ENCODE measurements at regions of chr11 and their contacts with region 1.

Region 1: DNA sequence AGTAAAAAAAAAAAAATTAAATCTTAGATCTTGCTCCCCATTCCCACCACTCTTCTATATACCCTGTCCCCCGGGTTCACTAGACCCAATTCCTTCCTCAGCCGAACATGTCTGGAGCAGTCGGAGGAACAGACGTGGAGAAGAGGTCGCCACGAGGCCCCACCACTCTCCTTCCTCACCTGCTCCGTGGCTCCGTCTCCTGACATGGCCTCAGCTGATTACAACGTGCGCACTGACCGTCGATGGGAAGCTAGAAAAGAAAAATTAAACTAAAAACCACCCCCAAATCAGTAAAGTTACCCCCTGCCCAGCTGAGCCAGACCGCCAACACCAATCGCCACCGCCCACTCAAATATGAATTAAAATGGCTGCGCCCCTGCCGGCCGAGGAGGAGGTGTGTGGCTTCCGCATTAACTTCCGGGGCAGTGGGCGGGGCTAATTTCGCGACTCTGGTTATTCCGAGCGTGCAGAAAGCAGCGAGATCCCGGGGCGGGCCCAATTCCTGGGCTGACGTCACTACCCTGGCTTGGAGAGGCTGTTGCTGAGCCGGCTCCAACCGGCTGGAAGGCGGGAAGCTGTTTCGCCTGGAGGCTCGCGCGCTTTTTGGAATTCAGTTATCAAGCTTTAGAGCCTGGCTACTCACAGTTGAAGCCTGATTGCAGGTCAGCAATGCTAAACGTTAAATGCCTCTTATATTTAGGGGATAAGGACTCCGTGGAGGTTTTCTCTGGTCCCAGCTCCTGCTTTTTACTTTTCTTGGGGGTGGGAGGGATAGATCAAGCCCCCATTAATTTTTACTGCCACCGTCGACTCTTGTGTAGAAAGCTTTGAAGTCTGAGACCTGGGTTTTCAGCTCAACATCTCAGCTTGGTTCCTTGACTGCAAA is at the start of gene CSTF3:
- DNase-seq: peak; percentile 80
- H3K4me3 ChIP-seq: peak within 1 kb of the TSS; percentile 96
- CTCF ChIP-seq: peak; percentile 50

Region 2: GRCh38 chr11:33179348-33179803 is 18.0 kb after region 1 on chr11:
- CTCF ChIA-PET with region 1: interaction called, 16 read pairs
- POLR2A ChIA-PET with region 1: no interaction called
- DNase-seq: no peak
- H3K4me3 ChIP-seq: no peak overlapping the region
- CTCF ChIP-seq: no peak

Region 3: GRCh38 chr11:33329705-33330329 is 168.5 kb after region 1 on chr11:
- CTCF ChIA-PET with region 1: interaction called, 95 read pairs
- POLR2A ChIA-PET with region 1: no interaction called
- DNase-seq: no peak
- H3K4me3 ChIP-seq: no peak overlapping the region
- CTCF ChIP-seq: peak; percentile 52

Region 4: DNA sequence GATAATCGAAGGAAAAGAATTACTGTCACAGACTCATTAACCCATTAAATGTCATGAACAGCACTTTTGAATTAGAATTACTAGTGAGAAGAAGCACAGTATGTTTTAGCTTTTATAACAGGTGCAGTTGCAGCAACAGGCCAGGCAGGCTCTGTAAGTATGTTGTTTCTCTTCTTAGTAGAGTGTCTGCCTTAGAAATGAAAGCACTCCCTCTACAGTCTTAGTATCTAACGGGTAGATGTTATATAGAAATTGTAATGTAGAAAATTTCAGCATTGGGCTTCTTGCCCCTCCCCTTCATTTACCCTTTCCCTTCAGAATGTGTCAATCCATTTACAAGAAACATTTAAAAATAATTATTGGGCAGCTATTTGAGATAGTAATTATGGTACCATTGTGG is 183.2 kb after region 1 on chr11:
- CTCF ChIA-PET with region 1: interaction called, 16 read pairs
- POLR2A ChIA-PET with region 1: no interaction called
- DNase-seq: no peak
- H3K4me3 ChIP-seq: no peak overlapping the region
- CTCF ChIP-seq: no peak

Region 5: GRCh38 chr11:33362051-33362910 is 200.9 kb after region 1 on chr11:
- CTCF ChIA-PET with region 1: interaction called, 12 read pairs
- POLR2A ChIA-PET with region 1: no interaction called
- DNase-seq: no peak
- H3K4me3 ChIP-seq: no peak overlapping the region
- CTCF ChIP-seq: no peak

Region 6: DNA sequence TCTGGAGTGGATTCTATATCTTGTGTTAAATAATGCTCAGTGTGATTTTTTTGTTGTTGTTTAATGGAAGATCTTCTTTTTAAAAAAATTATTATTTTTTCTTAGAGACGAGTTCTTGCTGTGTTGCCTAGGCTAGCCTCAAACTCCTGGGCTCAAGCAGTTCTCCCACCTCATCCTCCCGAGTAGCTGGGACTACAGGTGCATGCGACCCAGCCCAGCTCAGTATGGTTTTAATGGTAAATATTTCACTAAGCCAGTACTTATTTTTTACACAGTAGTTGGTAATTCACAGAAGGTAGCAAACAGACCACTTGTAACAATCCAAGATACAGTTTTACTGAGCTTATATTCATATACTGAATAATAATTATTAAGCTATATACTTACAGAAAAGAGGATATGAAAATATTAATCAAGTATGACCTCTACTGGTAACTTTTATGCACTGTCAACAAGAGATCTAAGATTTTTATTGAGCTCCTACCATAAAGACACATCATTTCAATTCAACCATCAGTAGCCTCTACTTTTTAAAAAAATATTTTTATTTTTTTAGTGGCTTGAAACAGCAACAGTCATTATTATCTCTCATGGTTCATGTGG is 581.0 kb after region 1 on chr11:
- CTCF ChIA-PET with region 1: interaction called, 14 read pairs
- POLR2A ChIA-PET with region 1: no interaction called
- DNase-seq: no peak
- H3K4me3 ChIP-seq: no peak overlapping the region
- CTCF ChIP-seq: peak; percentile 14

Region 7: GRCh38 chr11:33829433-33830141 is 668.2 kb after region 1 on chr11:
- CTCF ChIA-PET with region 1: interaction called, 10 read pairs
- POLR2A ChIA-PET with region 1: no interaction called
- DNase-seq: peak; percentile 12
- H3K4me3 ChIP-seq: peak overlapping the region; percentile 53
- CTCF ChIP-seq: peak; percentile 73